ENCODE measurements at regions of chr6 and their contacts with region 1.

Region 1: GRCh38 chr6:26216356-26216885 is 129.2 kb downstream of the HFE start:
- H3K4me3 ChIP-seq: peak overlapping the region; percentile 70
- H3K27ac ChIP-seq: no peak overlapping the region
- H3K4me1 ChIP-seq: no peaks in the 10 kb centered on the region
- CTCF ChIP-seq: no peak

Region 2: DNA sequence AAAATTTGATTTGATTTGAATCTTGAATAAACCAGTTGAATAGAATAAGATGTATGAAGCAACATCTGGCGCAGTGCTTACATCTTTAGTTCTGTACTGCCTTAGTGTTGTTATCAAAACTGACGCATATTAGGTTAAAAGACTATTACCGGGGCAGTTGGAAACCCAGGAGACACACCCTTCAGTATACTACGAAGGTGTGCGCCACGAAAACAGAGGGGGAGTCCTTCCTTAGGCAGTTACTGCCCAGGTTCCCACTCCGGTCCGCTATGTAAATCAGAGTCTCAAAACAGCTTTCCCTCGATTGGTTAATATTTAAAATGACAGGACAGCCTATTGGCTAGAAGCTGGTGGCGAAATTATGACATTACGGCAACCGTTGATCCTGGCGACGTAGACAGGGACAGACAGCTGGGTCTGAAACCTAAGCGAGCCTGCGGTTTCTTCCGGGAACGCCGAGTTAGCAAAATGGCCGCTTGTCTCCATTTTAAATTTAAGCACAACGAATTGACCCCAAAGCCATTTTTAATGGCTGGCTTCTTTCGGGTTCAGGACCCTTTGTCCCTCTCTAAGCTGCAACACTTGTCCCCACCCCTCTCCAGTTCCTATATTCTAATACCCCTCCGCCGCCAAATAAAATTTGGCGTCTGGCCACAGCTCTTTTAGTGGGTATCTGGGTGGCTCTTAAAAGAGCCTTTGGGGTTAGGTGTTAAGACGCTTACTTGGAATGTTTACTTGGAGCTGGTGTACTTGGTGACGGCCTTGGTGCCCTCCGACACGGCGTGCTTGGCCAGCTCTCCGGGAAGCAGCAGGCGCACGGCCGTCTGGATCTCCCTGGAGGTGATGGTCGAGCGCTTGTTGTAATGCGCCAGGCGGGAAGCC is 93.4 kb before region 1 on chr6:
- CTCF ChIA-PET with region 1: interaction called, 3 read pairs
- POLR2A ChIA-PET with region 1: interaction called, 70 read pairs
- H3K4me3 ChIP-seq: peak overlapping the region; percentile 50
- H3K27ac ChIP-seq: peak overlapping the region; percentile 60
- H3K4me1 ChIP-seq: no peaks in the 10 kb centered on the region
- CTCF ChIP-seq: no peak

Region 3: DNA sequence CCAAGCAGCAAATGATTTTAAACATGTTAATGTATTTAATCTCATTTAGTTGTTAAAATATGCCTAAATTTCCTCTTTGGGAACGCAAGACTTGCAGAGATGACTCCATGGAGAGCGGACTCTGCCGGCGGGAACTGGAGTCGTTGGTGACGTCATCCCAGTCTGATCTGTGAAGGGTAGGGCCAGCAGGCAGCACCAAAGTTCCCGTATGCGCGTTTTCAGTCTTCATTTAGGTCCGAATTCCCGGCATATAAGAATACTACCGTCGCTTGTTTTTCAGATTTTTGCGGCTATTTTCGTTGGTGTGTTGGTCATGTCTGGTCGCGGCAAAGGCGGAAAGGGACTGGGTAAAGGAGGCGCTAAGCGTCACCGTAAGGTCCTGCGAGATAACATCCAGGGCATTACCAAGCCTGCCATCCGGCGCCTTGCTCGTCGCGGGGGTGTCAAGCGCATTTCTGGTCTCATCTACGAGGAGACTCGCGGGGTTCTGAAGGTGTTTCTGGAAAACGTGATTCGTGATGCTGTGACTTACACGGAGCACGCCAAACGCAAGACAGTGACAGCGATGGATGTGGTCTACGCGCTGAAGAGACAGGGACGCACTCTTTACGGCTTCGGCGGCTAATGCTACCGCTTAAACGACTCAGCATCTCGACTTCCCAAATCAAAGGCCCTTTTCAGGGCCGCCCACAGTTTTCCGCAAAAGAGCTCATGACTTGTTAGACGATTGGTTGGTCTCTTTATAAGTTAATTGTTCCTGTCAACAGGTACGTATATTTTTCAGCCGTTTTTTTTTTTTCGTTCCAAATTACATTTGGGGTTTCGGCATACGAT is 11.9 kb before region 1 on chr6:
- CTCF ChIA-PET with region 1: interaction called, 11 read pairs
- POLR2A ChIA-PET with region 1: interaction called, 109 read pairs
- H3K4me3 ChIP-seq: peak overlapping the region; percentile 73
- H3K27ac ChIP-seq: peak overlapping the region; percentile 71
- H3K4me1 ChIP-seq: no peaks in the 10 kb centered on the region
- CTCF ChIP-seq: peak; percentile 81

Region 4: GRCh38 chr6:26272171-26272637 is 55.8 kb after region 1 on chr6:
- CTCF ChIA-PET with region 1: no interaction called
- POLR2A ChIA-PET with region 1: interaction called, 11 read pairs
- H3K4me3 ChIP-seq: no peak overlapping the region
- H3K27ac ChIP-seq: no peak overlapping the region
- H3K4me1 ChIP-seq: peaks cover 3% of the 10 kb centered on the region; the same call in 1 of the 2 replicates
- CTCF ChIP-seq: no peak

Region 5: GRCh38 chr6:26329763-26330511 is 113.5 kb after region 1 on chr6:
- CTCF ChIA-PET with region 1: no interaction called
- POLR2A ChIA-PET with region 1: interaction called, 10 read pairs
- H3K4me3 ChIP-seq: peak overlapping the region; percentile 73
- H3K27ac ChIP-seq: no peak overlapping the region
- H3K4me1 ChIP-seq: no peaks in the 10 kb centered on the region; the same call in 1 of the 2 replicates
- CTCF ChIP-seq: no peak

Region 6: GRCh38 chr6:26454631-26455030 is 238.2 kb after region 1 on chr6:
- CTCF ChIA-PET with region 1: no interaction called
- POLR2A ChIA-PET with region 1: no interaction called
- H3K4me3 ChIP-seq: no peak overlapping the region
- H3K27ac ChIP-seq: no peak overlapping the region
- H3K4me1 ChIP-seq: no peaks in the 10 kb centered on the region
- CTCF ChIP-seq: no peak